ENCODE measurements at regions of chr10 and their contacts with region 1.

Region 1: GRCh38 chr10:129888784-129889616 is 75.1 kb downstream of the EBF3 start:
- DNase-seq: peak; percentile 67 to 76
- ATAC-seq: peak; percentile 58 to 80 (median 74)
- H3K4me3 ChIP-seq: no peak overlapping the region
- H3K27ac ChIP-seq: peak overlapping the region in 3 of 10 donors; percentile 24 to 51 (median 44)
- H3K4me1 ChIP-seq: peaks cover 11 to 69% (median 37%) of the 10 kb centered on the region in 9 donors
- H3K27me3 ChIP-seq: no peaks in the 10 kb centered on the region
- CTCF ChIP-seq: peak; percentile 53 to 83 (median 74)

Region 2: GRCh38 chr10:129942936-129943715 is 54.1 kb after region 1 on chr10:
- intact Hi-C with region 1: loop called in 6 of 10 experiments (anchors 5 to 10 kb)
- DNase-seq: no peak
- ATAC-seq: no peak
- H3K4me3 ChIP-seq: no peak overlapping the region
- H3K27ac ChIP-seq: peak overlapping the region in 7 of 10 donors; percentile 1 to 71 (median 55)
- H3K4me1 ChIP-seq: peaks cover 9 to 96% (median 62%) of the 10 kb centered on the region in 9 donors
- H3K27me3 ChIP-seq: no peaks in the 10 kb centered on the region
- CTCF ChIP-seq: no peak

Region 3: GRCh38 chr10:129958148-129958628 is 69.2 kb after region 1 on chr10:
- intact Hi-C with region 1: loop called in 4 of 10 experiments (anchors 2 to 10 kb)
- DNase-seq: no peak
- ATAC-seq: peak in 5 of 8 donors; percentile 35 to 50 (median 38)
- H3K4me3 ChIP-seq: peak overlapping the region; percentile 29 to 91 (median 73)
- H3K27ac ChIP-seq: peak overlapping the region; percentile 80 to 94 (median 92)
- H3K4me1 ChIP-seq: peaks cover 0 to 64% (median 29%) of the 10 kb centered on the region in 9 donors
- H3K27me3 ChIP-seq: peaks cover 0 to 87% (median 63%) of the 10 kb centered on the region in 7 donors
- CTCF ChIP-seq: peak in 8 of 9 donors; percentile 7 to 62 (median 42)

Region 4: DNA sequence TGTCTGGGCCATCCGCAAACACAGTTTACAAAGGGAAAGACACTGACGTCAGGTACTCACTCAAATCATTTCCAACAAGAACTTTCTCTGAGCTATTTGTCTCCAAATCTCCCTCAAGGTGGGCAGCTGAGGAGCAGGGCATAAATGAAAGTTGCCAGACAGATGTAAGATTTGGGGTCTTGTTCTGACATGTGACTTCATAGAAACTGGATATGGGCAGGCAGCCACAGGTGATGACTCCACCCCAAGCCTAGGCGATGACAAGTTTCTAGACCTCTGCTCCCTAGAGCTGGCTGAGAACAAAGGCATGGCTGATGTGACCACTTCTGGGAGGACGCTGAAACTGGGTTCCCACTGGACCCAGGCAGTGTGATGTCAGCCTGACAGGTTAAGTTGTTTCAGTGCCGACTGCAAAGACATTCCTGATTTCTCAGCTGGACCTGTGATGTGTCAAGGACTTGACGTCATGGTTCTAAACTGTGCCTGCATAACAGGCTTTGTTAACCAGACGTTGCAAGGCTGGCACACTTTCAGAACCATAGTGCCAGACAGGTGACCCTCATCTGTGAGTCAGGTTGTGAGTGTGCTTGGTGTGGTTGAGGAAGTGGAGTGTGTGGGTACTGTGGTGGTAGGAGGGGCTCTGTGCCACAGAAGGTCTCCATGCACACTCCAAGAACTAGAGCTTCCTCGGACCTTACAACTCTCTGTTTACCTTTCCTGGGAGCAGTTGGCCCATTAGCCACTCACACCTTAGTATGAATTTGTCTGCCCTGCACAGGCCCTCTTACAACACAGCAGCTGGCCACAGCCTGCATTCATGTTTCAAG is 115.0 kb after region 1 on chr10:
- intact Hi-C with region 1: no loop called
- DNase-seq: no peak
- ATAC-seq: no peak
- H3K4me3 ChIP-seq: no peak overlapping the region
- H3K27ac ChIP-seq: no peak overlapping the region
- H3K4me1 ChIP-seq: no peaks in the 10 kb centered on the region
- H3K27me3 ChIP-seq: peaks cover 0 to 34% (median 19%) of the 10 kb centered on the region in 7 donors
- CTCF ChIP-seq: no peak

Measured in heart right ventricle (tissue), 16 donors.